Common myeloid progenitor, CD34-positive (primary cell): ENCODE measurements at regions of chr3 and their contacts with region 1.

Region 1: GRCh38 chr3:13495921-13496723 is 16.0 kb downstream of the HDAC11 start:
- DNase-seq: peak; percentile 72 to 86 (median 80)
- H3K4me3 ChIP-seq: no peak overlapping the region
- H3K27ac ChIP-seq: no peak overlapping the region
- H3K4me1 ChIP-seq: peaks cover 0 to 8% (median 4%) of the 10 kb centered on the region in 4 experiments
- H3K27me3 ChIP-seq: no peaks in the 10 kb centered on the region

Region 2: GRCh38 chr3:13073326-13074005 is 422.7 kb before region 1 on chr3 and contains the start of gene IQSEC1:
- CTCF ChIA-PET with region 1: no interaction called
- POLR2A ChIA-PET with region 1: no interaction called
- DNase-seq: peak; percentile 50 to 79 (median 78)
- H3K4me3 ChIP-seq: peak within 1 kb of the TSS in 2 of 7 experiments; percentile 30 to 46
- H3K27ac ChIP-seq: no peak within 1 kb of the TSS
- H3K4me1 ChIP-seq: peaks cover 0 to 35% (median 30%) of the 10 kb centered on the region in 4 experiments
- H3K27me3 ChIP-seq: peaks cover 0 to 41% (median 9%) of the 10 kb centered on the region in 5 experiments

Region 3: DNA sequence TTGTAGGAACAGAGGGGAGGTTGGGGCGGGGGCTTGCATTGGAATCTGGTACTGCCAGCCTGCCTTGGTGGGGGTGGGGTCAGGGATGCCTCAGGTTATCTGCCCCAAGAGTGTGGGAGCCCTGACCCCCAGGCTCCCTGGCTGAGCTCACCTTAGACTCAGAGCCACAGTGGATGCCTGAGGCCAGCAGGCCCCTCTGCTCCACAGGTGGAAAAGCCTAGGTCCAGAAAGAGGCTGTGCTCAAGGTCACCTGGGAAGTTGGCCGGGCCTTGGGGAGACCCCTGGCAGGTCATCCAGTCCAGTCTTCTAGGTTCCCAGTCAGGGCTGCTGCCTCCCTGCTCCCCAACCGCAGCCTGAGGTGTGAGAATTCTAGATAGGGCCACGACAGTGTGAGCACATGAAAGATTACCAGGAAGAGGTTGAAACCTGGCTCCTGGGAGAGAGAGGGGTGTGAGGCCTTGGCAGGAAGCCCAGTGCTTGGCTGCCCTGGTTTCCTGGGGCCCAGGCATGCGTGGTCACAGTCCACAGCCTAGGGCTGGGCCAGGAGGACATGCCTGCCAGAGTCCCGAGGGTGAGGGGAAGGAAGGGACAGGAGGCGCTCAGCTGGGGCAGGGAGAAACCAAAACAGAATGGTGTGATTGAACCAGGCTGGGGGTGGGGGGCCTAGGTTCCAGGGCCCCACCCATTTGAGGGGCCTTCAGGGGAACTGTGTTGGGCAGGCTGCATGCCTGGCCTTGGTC is 11.1 kb before region 1 on chr3:
- CTCF ChIA-PET with region 1: interaction called, 23 read pairs
- POLR2A ChIA-PET with region 1: no interaction called
- DNase-seq: peak; percentile 77 to 88 (median 83)
- H3K4me3 ChIP-seq: peak overlapping the region in 2 of 7 experiments; percentile 6 to 18
- H3K27ac ChIP-seq: peak overlapping the region in 1 of 2 experiments; percentile 14
- H3K4me1 ChIP-seq: peaks cover 0 to 38% (median 22%) of the 10 kb centered on the region in 4 experiments
- H3K27me3 ChIP-seq: peaks cover 0 to 3% (median 0%) of the 10 kb centered on the region in 5 experiments

Region 4: DNA sequence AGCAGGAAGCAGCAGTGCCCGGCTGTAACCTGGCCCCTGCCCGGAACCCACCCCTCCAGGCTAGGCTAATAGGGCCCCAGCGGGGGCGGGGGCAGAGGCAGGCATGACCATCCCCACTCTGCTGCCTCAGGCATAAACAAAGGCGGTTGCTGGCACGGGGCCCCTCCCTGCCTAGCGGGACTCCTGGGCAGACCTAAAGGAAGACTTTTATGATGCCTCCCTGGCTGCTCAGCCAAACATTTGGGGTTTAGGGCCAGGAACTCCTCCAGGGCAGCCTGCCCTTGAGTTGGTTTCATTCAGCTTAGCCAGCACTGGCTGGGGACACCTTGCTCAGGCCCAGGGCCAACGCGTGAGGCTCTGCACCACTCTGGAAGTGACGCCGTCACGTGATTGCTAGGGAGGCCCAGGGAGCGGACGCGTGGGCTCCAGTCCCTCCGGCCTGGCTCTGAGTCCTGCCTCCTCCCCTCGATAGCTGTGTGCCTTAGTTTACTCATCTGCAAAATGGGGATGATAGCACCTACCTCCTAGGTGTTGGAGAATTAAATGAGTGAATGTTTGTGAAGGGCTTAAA is 11.7 kb after region 1 on chr3:
- CTCF ChIA-PET with region 1: interaction called, 10 read pairs
- POLR2A ChIA-PET with region 1: no interaction called
- DNase-seq: peak in 2 of 3 donors; percentile 24 to 37
- H3K4me3 ChIP-seq: peak overlapping the region in 1 of 7 experiments; percentile 21
- H3K27ac ChIP-seq: no peak overlapping the region
- H3K4me1 ChIP-seq: peaks cover 1 to 14% (median 10%) of the 10 kb centered on the region in 4 experiments
- H3K27me3 ChIP-seq: no peaks in the 10 kb centered on the region